ENCODE measurements at regions of chr1 and their contacts with region 1.

Region 1: DNA sequence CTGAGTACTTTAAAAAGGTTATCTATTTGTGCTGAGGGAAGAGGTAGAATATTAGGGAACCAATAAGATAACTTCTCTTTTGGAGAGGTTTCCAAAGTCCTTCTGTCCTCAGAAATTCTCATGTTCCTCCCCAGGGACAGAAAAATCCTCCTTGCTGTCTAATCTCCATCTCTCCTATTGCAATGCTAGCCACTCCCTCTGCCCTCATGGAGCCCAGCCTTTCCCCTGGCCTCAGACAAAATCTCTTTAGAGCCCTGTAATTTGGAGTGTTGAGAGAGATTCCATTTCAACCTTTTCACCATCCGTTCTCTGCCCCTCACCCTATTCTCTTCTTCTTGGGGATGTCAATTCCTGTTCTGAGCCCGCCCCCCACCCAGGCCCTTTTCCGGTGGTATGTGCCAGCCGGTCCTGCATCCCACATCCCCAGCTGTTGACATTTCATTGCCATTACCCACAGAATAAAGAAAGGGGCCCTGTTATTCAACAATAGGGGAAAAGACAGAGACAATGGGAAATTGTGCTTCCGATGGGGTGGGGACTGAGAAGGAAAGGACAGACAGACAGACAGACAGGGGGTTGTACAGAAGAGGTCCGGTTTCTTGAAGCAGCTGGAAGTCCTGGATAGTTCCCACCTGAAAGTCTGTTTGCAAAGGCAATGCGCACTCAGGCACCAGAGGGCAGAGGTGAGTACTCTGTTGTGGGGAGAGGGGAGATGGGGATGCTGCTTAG is at the start of gene HAPLN2:
- DNase-seq: no peak
- H3K4me3 ChIP-seq: no peak within 1 kb of the TSS
- H3K27ac ChIP-seq: no peak within 1 kb of the TSS
- H3K4me1 ChIP-seq: peaks cover 0 to 13% of the 10 kb centered on the region in 2 experiments; a peak in 3 of 4 replicates
- H3K27me3 ChIP-seq: peaks cover 14% of the 10 kb centered on the region
- CTCF ChIP-seq: peak; percentile 55
- EP300 ChIP-seq: no peak
- RAD21 ChIP-seq: peak; percentile 38
- polyA plus RNA-seq, gene HAPLN2: 0.10 and 0.20 TPM in 2 replicates

Region 2: GRCh38 chr1:156436142-156437036 is 182.6 kb before region 1 on chr1:
- CTCF ChIA-PET with region 1: no interaction called
- POLR2A ChIA-PET with region 1: no interaction called
- DNase-seq: peak; percentile 86
- H3K4me3 ChIP-seq: peak overlapping the region in 1 of 2 experiments; percentile 29; a peak in 2 of 4 replicates
- H3K27ac ChIP-seq: no peak overlapping the region
- H3K4me1 ChIP-seq: no peaks in the 10 kb centered on the region; a peak in 1 of 4 replicates
- H3K27me3 ChIP-seq: peaks cover 74% of the 10 kb centered on the region
- CTCF ChIP-seq: no peak
- EP300 ChIP-seq: no peak
- RAD21 ChIP-seq: no peak

Region 3: DNA sequence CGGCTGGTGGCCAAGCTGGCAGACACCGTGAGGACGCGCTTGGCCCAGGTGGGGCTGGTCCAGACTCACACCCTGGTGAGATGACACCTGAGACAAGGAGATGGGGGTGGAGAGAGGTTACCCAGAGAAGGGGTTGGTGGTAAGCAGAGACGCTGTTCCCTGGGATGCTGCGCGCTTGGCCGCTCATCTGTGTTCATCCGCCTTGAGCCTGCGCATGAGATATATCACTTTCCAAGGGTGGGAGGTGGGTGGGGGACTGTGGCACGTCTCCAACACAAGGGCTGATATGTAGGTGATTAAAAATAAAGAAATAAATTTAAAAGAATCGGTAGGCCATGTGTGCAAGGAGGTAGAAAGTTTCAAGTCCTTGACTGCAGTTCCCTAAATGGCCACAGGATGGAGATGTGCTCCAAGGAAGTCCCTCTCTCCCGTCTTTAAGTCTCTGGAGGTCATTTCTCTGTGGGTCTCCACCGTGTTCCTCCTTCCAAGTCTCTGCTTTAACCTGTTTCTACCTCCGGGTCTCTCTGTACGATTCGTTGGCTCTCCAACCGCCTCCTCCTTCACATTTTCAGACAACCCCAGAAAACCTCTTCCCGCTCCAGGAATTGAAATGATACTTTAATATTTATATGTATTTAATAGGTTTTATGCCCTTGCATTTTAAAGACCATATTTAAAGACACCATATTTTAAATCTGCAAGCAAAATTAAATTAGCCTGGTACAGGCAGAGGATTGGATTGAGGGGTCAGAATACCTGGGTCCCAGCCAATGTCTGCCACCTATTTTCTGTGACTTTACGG is 35.0 kb before region 1 on chr1:
- CTCF ChIA-PET with region 1: interaction called, 32 read pairs
- POLR2A ChIA-PET with region 1: interaction called, 4 read pairs
- DNase-seq: peak; percentile 78
- H3K4me3 ChIP-seq: no peak overlapping the region
- H3K27ac ChIP-seq: no peak overlapping the region
- H3K4me1 ChIP-seq: no peaks in the 10 kb centered on the region
- H3K27me3 ChIP-seq: no peaks in the 10 kb centered on the region
- CTCF ChIP-seq: peak; percentile 88
- EP300 ChIP-seq: no peak
- RAD21 ChIP-seq: peak; percentile 89

Region 4: GRCh38 chr1:156601122-156601830 is 17.7 kb before region 1 on chr1 and contains the start of gene GPATCH4:
- CTCF ChIA-PET with region 1: interaction called, 16 read pairs
- POLR2A ChIA-PET with region 1: no interaction called
- DNase-seq: peak; percentile 77
- H3K4me3 ChIP-seq: peak within 1 kb of the TSS; percentile 72 to 92
- H3K27ac ChIP-seq: peak within 1 kb of the TSS; percentile 85 to 89
- H3K4me1 ChIP-seq: peaks cover 6 to 9% of the 10 kb centered on the region in 2 experiments; a peak in 2 of 4 replicates
- H3K27me3 ChIP-seq: no peaks in the 10 kb centered on the region
- CTCF ChIP-seq: no peak
- EP300 ChIP-seq: no peak
- RAD21 ChIP-seq: no peak
- polyA plus RNA-seq, gene GPATCH4: 36.6 and 46.8 TPM in 2 replicates

Region 5: GRCh38 chr1:156608036-156608674 is 10.9 kb before region 1 on chr1:
- CTCF ChIA-PET with region 1: interaction called, 109 read pairs
- POLR2A ChIA-PET with region 1: no interaction called
- DNase-seq: peak; percentile 65
- H3K4me3 ChIP-seq: peak overlapping the region in 1 of 2 experiments; percentile 18; a peak in 1 of 4 replicates
- H3K27ac ChIP-seq: no peak overlapping the region
- H3K4me1 ChIP-seq: peaks cover 0 to 2% of the 10 kb centered on the region in 2 experiments; a peak in 1 of 4 replicates
- H3K27me3 ChIP-seq: no peaks in the 10 kb centered on the region
- CTCF ChIP-seq: peak; percentile 81
- EP300 ChIP-seq: no peak
- RAD21 ChIP-seq: peak; percentile 81

Region 6: GRCh38 chr1:156641761-156642264 is 22.8 kb after region 1 on chr1 and contains the start of gene BCAN:
- CTCF ChIA-PET with region 1: interaction called, 244 read pairs
- POLR2A ChIA-PET with region 1: no interaction called
- DNase-seq: peak; percentile 86
- H3K4me3 ChIP-seq: peak within 1 kb of the TSS; percentile 39 to 46
- H3K27ac ChIP-seq: no peak within 1 kb of the TSS
- H3K4me1 ChIP-seq: peaks cover 0 to 34% of the 10 kb centered on the region in 2 experiments; a peak in 1 of 4 replicates
- H3K27me3 ChIP-seq: peaks cover 35% of the 10 kb centered on the region
- CTCF ChIP-seq: no peak
- EP300 ChIP-seq: no peak
- RAD21 ChIP-seq: no peak
- polyA plus RNA-seq, gene BCAN: 0.13 and 0.25 TPM in 2 replicates

Region 7: DNA sequence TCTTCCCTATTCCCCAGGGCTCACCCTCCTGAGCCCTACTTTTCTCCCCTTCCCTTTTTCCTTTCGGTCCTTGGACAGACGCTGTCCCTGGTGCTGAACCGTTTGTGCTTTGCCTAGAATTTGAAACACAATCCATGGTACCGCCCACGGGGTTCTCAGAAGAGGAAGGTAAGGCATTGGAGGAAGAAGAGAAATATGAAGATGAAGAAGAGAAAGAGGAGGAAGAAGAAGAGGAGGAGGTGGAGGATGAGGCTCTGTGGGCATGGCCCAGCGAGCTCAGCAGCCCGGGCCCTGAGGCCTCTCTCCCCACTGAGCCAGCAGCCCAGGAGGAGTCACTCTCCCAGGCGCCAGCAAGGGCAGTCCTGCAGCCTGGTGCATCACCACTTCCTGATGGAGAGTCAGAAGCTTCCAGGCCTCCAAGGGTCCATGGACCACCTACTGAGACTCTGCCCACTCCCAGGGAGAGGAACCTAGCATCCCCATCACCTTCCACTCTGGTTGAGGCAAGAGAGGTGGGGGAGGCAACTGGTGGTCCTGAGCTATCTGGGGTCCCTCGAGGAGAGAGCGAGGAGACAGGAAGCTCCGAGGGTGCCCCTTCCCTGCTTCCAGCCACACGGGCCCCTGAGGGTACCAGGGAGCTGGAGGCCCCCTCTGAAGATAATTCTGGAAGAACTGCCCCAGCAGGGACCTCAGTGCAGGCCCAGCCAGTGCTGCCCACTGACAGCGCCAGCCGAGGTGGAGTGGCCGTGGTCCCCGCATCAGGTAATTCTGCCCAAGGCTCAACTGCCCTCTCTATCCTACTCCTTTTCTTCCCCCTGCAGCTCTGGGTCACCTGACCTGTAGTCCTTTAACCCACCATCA is 33.3 kb after region 1 on chr1:
- CTCF ChIA-PET with region 1: interaction called, 643 read pairs
- POLR2A ChIA-PET with region 1: interaction called, 3 read pairs
- DNase-seq: no peak
- H3K4me3 ChIP-seq: no peak overlapping the region
- H3K27ac ChIP-seq: no peak overlapping the region
- H3K4me1 ChIP-seq: peaks cover 0 to 16% of the 10 kb centered on the region in 2 experiments; a peak in 1 of 4 replicates
- H3K27me3 ChIP-seq: no peaks in the 10 kb centered on the region
- CTCF ChIP-seq: no peak
- EP300 ChIP-seq: no peak
- RAD21 ChIP-seq: no peak

Region 8: GRCh38 chr1:156677616-156678596 is 58.9 kb after region 1 on chr1:
- CTCF ChIA-PET with region 1: interaction called, 237 read pairs
- POLR2A ChIA-PET with region 1: interaction called, 9 read pairs
- DNase-seq: peak; percentile 78
- H3K4me3 ChIP-seq: peak overlapping the region; percentile 55 to 71
- H3K27ac ChIP-seq: peak overlapping the region; percentile 40 to 67; a peak in 3 of 4 replicates
- H3K4me1 ChIP-seq: peaks cover 21 to 42% of the 10 kb centered on the region in 2 experiments; a peak in 3 of 4 replicates
- H3K27me3 ChIP-seq: no peaks in the 10 kb centered on the region
- CTCF ChIP-seq: peak; percentile 97
- EP300 ChIP-seq: no peak
- RAD21 ChIP-seq: peak; percentile 98

Measured in SK-N-SH (cell line).